Activated CD8-positive, alpha-beta memory T cell treated with anti-CD3 and anti-CD28 coated beads, Interleukin-2, amount 10 ng/mL, durations not matched to agents 7 days and 5 days (primary cell): ENCODE measurements at regions of chr4 and their contacts with region 1.

Region 1: DNA sequence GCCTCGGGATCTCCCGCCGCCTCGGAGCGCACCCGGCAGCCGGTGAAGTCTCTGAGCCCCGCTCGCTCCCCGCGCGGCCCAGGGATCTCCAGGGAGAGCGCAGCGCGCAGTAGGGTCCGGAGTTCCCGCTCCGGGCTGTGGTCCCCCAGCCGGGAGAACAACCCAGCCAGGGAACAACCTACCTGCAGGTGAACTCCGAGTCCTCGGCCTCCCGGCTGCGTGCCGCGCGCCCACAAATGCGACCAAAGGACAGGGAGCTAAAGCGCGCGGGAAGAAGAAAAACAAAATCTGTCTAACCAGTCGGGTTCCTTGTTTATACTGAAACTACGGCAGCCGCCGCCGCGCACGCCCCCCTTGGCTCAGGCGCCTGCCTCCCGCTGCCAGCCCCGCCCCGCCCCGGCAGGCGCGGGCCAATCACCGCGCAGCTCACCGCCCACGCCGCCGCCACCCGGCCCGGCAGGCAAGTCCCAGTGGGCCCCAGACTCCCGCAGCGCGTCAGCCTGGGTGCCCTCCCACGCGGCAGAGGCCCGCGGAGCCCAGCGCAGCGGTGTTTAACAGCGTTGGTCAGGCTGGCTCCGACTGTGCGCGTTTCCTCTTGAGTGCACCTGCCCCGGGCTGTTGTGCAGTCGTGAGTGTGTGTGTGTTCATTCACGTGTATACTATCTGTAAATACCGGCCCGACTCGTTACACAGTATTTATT is at the start of gene RASGEF1B:
- DNase-seq: peak; percentile 92
- ATAC-seq: peak; percentile 96
- H3K4me3 Mint-ChIP-seq: peak within 1 kb of the TSS; percentile 88
- H3K27ac Mint-ChIP-seq: peak within 1 kb of the TSS; percentile 83
- H3K4me1 Mint-ChIP-seq: peaks cover 26% of the 10 kb centered on the region
- H3K27me3 Mint-ChIP-seq: peaks cover 6% of the 10 kb centered on the region
- total RNA-seq, gene RASGEF1B: 3.5 to 4.5 TPM

Region 2: GRCh38 chr4:81314196-81314896 is 157.4 kb before region 1 on chr4:
- CTCF ChIA-PET with region 1: no interaction called
- DNase-seq: no peak
- ATAC-seq: no peak
- H3K4me3 Mint-ChIP-seq: no peak overlapping the region
- H3K27ac Mint-ChIP-seq: no peak overlapping the region
- H3K4me1 Mint-ChIP-seq: no peaks in the 10 kb centered on the region
- H3K27me3 Mint-ChIP-seq: no peaks in the 10 kb centered on the region

Region 3: GRCh38 chr4:81491943-81492342 is 20.2 kb after region 1 on chr4:
- CTCF ChIA-PET with region 1: interaction called, 41 read pairs
- DNase-seq: no peak
- ATAC-seq: peak; percentile 78
- H3K4me3 Mint-ChIP-seq: peak overlapping the region; percentile 3
- H3K27ac Mint-ChIP-seq: peak overlapping the region; percentile 69
- H3K4me1 Mint-ChIP-seq: peaks cover 47% of the 10 kb centered on the region
- H3K27me3 Mint-ChIP-seq: no peaks in the 10 kb centered on the region

Region 4: GRCh38 chr4:81844717-81845116 is 373.0 kb after region 1 on chr4:
- CTCF ChIA-PET with region 1: interaction called, 101 read pairs
- DNase-seq: peak; percentile 82
- ATAC-seq: peak; percentile 81
- H3K4me3 Mint-ChIP-seq: no peak overlapping the region
- H3K27ac Mint-ChIP-seq: no peak overlapping the region
- H3K4me1 Mint-ChIP-seq: no peaks in the 10 kb centered on the region
- H3K27me3 Mint-ChIP-seq: peaks cover 4% of the 10 kb centered on the region